Right ventricle myocardium superior (tissue), 1 donor: ENCODE measurements at regions of chr1 and their contacts with region 1.

Region 1: GRCh38 chr1:165703648-165704047 is 5.3 kb upstream of the ALDH9A1 start:
- DNase-seq: no peak
- ATAC-seq: no peak

Region 2: DNA sequence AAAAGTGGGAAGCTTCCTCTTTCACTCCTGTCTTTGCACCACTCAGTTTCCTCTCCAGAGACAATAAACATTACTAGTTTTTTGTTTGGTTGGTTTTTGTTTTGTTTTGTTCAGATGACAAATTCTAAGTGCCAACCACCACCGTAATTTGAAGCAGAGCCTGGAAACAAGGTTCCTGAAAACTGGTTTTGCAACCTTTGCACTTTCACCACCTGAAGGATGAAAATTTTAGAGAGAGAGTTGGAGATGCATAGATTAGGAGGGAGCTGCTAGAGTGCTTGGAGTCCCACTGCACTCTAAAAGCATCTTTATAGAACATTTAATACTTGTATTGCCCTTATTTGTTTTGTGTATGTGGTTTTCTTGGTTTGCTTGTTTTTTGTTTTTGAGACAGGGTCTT is 92.8 kb before region 1 on chr1:
- intact Hi-C with region 1: loop called (anchors 10 kb)
- DNase-seq: no peak
- ATAC-seq: no peak